Activated T-helper 1 cell treated with anti-CD3 and anti-CD28 coated beads, Interleukin-12 subunit alpha, Interleukin-12 subunit beta, Interleukin-2, Interleukin-4 antibody, amounts not matched to agents 30 ng/mL and 10 ng/mL and 1 ng/mL, durations not matched to agents 14 hours and 24 hours and 36 hours (primary cell): ENCODE measurements at regions of chr10 and their contacts with region 1.

Region 1: DNA sequence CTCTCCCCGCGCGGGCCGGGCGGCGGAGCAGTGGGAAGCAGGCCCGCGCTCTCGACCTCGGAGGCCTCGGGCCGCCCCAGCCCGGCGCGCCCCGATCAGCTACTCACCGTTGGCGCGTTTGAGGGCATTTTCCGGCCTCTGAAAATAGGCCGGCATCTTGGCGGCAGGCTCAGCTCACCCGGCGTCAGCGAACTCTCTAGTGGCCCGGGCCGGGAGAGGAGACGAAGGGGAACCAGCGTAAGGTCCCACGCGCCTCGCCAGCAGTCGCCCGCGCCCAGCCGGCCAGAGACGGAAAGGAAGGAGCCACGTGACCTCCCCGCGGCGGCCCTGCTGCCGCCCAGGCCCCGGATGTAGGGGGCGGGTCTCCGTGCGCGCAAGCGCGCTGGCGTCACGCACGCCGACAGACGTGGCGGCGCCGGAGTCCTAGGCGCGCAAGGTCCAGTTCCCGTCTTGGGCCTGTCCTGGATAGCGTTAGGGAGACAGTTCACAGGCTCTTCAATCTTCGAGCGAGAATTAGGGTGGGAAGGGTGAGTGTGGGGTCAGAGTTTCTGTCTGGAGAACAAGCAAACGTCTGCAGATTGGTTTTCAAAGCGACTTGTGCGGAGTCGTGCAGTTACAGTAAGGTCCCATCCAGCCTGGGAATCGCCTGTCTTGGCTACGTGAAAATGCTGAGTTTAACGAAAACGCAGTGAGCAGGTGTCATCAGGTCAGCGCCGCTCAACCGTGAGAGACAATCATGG is at the start of gene EIF3A:
- DNase-seq: peak; percentile 94
- H3K4me3 Mint-ChIP-seq: peak within 1 kb of the TSS; percentile 98
- H3K27ac Mint-ChIP-seq: peak within 1 kb of the TSS; percentile 94
- H3K4me1 Mint-ChIP-seq: peaks cover 33% of the 10 kb centered on the region
- H3K27me3 Mint-ChIP-seq: no peaks in the 10 kb centered on the region
- total RNA-seq, gene EIF3A: 181 and 183 TPM in 2 replicates

Region 2: GRCh38 chr10:119103903-119104652 is 23.4 kb after region 1 on chr10 and contains the start of gene DENND10:
- intact Hi-C with region 1: loop called (anchors 1 kb)
- DNase-seq: peak; percentile 68
- H3K4me3 Mint-ChIP-seq: peak within 1 kb of the TSS; percentile 87
- H3K27ac Mint-ChIP-seq: peak within 1 kb of the TSS; percentile 58
- H3K4me1 Mint-ChIP-seq: peaks cover 22% of the 10 kb centered on the region
- H3K27me3 Mint-ChIP-seq: no peaks in the 10 kb centered on the region
- total RNA-seq, gene DENND10: 20.1 and 25.4 TPM in 2 replicates

Region 3: GRCh38 chr10:119165171-119166110 is 84.8 kb after region 1 on chr10 and contains the start of gene SFXN4:
- intact Hi-C with region 1: loop called (anchors 1 kb)
- DNase-seq: peak; percentile 82
- H3K4me3 Mint-ChIP-seq: peak within 1 kb of the TSS; percentile 91
- H3K27ac Mint-ChIP-seq: peak within 1 kb of the TSS; percentile 94
- H3K4me1 Mint-ChIP-seq: peaks cover 45% of the 10 kb centered on the region
- H3K27me3 Mint-ChIP-seq: no peaks in the 10 kb centered on the region
- total RNA-seq, gene SFXN4: 58.2 and 58.7 TPM in 2 replicates

Region 4: DNA sequence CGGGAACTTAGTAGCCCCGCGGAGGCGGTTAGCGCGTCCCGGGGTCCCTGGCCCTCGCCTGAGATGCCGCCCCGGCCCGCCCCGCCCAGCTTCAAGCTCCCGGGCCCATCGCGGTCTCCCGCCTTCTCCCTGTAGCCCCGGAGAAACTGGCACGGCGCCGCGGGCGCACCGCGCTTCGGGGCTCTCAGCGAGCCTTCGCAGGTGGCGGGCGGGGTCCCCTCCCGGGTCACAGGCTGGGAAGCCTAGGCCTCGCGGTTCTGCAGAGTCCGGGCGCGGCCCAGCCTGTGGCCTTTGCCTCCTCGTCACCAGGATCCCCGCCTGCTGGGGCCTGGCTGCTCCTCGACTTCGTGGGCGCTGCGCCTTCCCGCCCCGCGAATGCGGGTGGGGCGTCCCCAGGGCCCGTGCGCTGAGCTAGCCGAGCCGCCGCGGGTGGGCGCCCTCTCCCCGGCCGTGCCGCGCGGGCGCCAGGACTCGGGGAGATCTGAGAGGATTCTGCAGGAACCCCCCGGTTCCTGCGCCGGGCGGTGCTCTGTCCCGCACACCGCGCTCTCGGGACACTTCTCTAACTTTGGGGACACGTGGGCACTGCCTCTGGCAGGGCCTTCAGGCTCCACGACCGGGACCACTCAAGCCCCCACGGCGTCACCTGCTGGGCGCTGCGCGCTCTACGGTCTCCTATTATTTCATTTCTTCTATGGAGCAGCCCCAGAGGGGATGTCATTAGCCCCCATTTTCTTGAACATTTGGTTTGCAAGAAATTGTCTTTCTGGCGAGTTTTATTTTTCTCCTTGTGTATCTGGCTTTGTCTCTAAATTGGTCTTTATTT is 462.5 kb after region 1 on chr10:
- intact Hi-C with region 1: loop called (anchors 2 kb)
- DNase-seq: peak; percentile 50
- H3K4me3 Mint-ChIP-seq: peak overlapping the region; percentile 84
- H3K27ac Mint-ChIP-seq: peak overlapping the region; percentile 91
- H3K4me1 Mint-ChIP-seq: peaks cover 40% of the 10 kb centered on the region
- H3K27me3 Mint-ChIP-seq: peaks cover 15% of the 10 kb centered on the region

Region 5: GRCh38 chr10:119725828-119726675 is 645.4 kb after region 1 on chr10 and contains the start of gene INPP5F:
- intact Hi-C with region 1: loop called (anchors 5 kb)
- DNase-seq: peak; percentile 98
- H3K4me3 Mint-ChIP-seq: peak within 1 kb of the TSS; percentile 93
- H3K27ac Mint-ChIP-seq: peak within 1 kb of the TSS; percentile 81
- H3K4me1 Mint-ChIP-seq: peaks cover 39% of the 10 kb centered on the region
- H3K27me3 Mint-ChIP-seq: no peaks in the 10 kb centered on the region
- total RNA-seq, gene INPP5F: 17.7 and 19.4 TPM in 2 replicates